Activated CD4-positive, alpha-beta T cell treated with anti-CD3 and anti-CD28 coated beads for 36 hours (primary cell): ENCODE measurements at regions of chr5 and their contacts with region 1.

Region 1: GRCh38 chr5:55307383-55308253 is at the starts of genes DHX29 and MTREX:
- DNase-seq: peak; percentile 93
- ATAC-seq: peak; percentile 94
- H3K4me3 Mint-ChIP-seq: no peak within 1 kb of the TSS
- H3K27ac Mint-ChIP-seq: no peak within 1 kb of the TSS
- H3K4me1 Mint-ChIP-seq: peaks cover 30% of the 10 kb centered on the region
- H3K27me3 Mint-ChIP-seq: no peaks in the 10 kb centered on the region
- total RNA-seq, gene DHX29: 12.1 to 12.9 TPM
- total RNA-seq, gene MTREX: 98.2 to 106 TPM

Region 2: GRCh38 chr5:55226027-55226933 is 81.3 kb before region 1 on chr5:
- CTCF ChIA-PET with region 1: interaction called, 8 read pairs
- POLR2A ChIA-PET with region 1: no interaction called
- intact Hi-C with region 1: loop called (anchors 1 to 5 kb)
- DNase-seq: peak; percentile 88
- ATAC-seq: peak; percentile 70
- H3K4me3 Mint-ChIP-seq: peak overlapping the region; percentile 61
- H3K27ac Mint-ChIP-seq: no peak overlapping the region
- H3K4me1 Mint-ChIP-seq: peaks cover 37% of the 10 kb centered on the region
- H3K27me3 Mint-ChIP-seq: peaks cover 78% of the 10 kb centered on the region

Region 3: GRCh38 chr5:55534436-55535198 is 227.0 kb after region 1 on chr5 and contains the start of gene PLPP1:
- CTCF ChIA-PET with region 1: no interaction called
- POLR2A ChIA-PET with region 1: no interaction called
- intact Hi-C with region 1: loop called in 1 of 2 experiments (anchors 1 kb)
- DNase-seq: peak; percentile 91
- ATAC-seq: peak; percentile 89
- H3K4me3 Mint-ChIP-seq: peak within 1 kb of the TSS; percentile 79
- H3K27ac Mint-ChIP-seq: peak within 1 kb of the TSS; percentile 88
- H3K4me1 Mint-ChIP-seq: peaks cover 27% of the 10 kb centered on the region
- H3K27me3 Mint-ChIP-seq: no peaks in the 10 kb centered on the region
- total RNA-seq, gene PLPP1: 7.9 to 8.2 TPM

Region 4: GRCh38 chr5:55675119-55675518 is 367.5 kb after region 1 on chr5:
- CTCF ChIA-PET with region 1: no interaction called
- POLR2A ChIA-PET with region 1: no interaction called
- intact Hi-C with region 1: no loop called
- DNase-seq: no peak
- ATAC-seq: no peak
- H3K4me3 Mint-ChIP-seq: no peak overlapping the region
- H3K27ac Mint-ChIP-seq: no peak overlapping the region
- H3K4me1 Mint-ChIP-seq: no peaks in the 10 kb centered on the region
- H3K27me3 Mint-ChIP-seq: no peaks in the 10 kb centered on the region

Region 5: DNA sequence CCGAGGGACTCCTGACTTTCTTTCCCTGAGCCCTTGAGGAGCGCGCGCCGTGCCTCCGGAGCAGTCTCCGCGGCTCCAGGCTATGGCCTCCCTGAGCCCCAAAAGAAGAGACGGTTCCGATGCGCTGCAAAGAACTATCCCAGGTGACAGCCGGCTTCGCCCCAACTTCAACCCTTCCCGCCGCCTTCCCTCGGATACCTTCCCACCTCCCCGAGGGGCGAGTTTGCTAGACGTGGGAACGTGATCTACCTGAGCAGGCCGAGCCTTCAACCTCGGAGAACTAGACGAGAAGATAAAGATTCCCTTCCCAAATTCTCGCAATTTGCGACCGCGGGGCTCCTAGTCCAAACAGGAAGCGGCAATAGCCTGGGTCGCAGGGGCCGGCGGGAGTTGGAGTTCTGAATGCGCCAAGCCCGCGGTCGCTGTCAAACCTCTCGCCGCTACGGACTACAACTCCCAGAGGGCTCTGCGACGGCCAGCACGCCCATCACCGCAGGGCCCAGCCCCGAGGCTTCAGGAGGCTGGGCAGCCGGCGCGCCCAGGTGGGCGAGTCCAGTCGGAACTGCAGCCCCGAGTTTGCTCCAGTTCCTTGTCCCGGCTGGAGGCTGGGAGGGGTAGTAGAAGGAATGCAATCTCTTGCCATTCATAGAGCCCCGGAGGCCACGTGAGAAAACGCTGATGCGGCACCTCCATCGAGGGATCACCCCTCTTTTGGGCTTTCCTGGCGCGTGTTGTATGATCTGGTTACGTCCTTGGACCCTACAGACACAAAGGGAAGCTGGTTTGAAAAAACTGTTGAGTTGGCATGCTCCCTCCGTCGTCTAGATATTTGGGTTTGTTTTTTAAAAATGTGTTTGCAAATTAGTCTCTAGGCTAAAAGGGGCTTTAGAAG is 404.6 kb after region 1 on chr5 and contains the start of gene SLC38A9:
- CTCF ChIA-PET with region 1: no interaction called
- POLR2A ChIA-PET with region 1: no interaction called
- intact Hi-C with region 1: loop called in 1 of 2 experiments (anchors 1 kb)
- DNase-seq: peak; percentile 97
- ATAC-seq: peak; percentile 100
- H3K4me3 Mint-ChIP-seq: peak within 1 kb of the TSS; percentile 93
- H3K27ac Mint-ChIP-seq: peak within 1 kb of the TSS; percentile 92
- H3K4me1 Mint-ChIP-seq: peaks cover 24% of the 10 kb centered on the region
- H3K27me3 Mint-ChIP-seq: no peaks in the 10 kb centered on the region
- total RNA-seq, gene SLC38A9: 12.9 to 16.2 TPM

Region 6: DNA sequence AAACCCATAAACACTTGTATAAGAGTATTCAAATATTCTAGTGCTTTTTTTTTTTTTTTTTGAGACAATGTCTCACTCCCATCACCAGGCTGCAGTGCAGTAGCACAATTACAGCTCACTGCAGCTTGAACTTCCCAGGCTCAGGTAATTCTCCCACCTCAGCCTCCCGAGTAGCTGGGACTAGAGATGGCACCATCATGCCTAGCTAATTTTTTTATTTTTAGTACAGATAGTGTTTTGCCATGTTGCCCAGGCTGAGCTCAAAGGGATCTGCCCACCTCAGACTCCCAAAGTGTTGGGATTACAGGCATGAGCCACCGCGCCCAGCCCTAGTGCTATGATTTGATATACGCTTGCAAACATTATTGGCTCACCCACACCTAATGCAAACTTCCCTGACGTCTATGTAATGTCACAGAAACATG is 675.4 kb after region 1 on chr5:
- CTCF ChIA-PET with region 1: no interaction called
- POLR2A ChIA-PET with region 1: interaction called, 12 read pairs
- intact Hi-C with region 1: no loop called
- DNase-seq: peak; percentile 46
- ATAC-seq: peak; percentile 24
- H3K4me3 Mint-ChIP-seq: peak overlapping the region; percentile 37
- H3K27ac Mint-ChIP-seq: peak overlapping the region; percentile 67
- H3K4me1 Mint-ChIP-seq: peaks cover 77% of the 10 kb centered on the region
- H3K27me3 Mint-ChIP-seq: no peaks in the 10 kb centered on the region

Region 7: GRCh38 chr5:56791396-56791795 is 1483.8 kb after region 1 on chr5:
- CTCF ChIA-PET with region 1: no interaction called
- POLR2A ChIA-PET with region 1: interaction called, 12 read pairs
- intact Hi-C with region 1: no loop called
- DNase-seq: no peak
- ATAC-seq: peak; percentile 96
- H3K4me3 Mint-ChIP-seq: no peak overlapping the region
- H3K27ac Mint-ChIP-seq: no peak overlapping the region
- H3K4me1 Mint-ChIP-seq: peaks cover 6% of the 10 kb centered on the region
- H3K27me3 Mint-ChIP-seq: no peaks in the 10 kb centered on the region